PC-3 (cell line): ENCODE measurements at regions of chr12 and their contacts with region 1.

Region 1: GRCh38 chr12:111942557-111942956 is 70.4 kb downstream of the TMEM116 start:
- DNase-seq: peak; percentile 94
- ATAC-seq: peak; percentile 88
- H3K4me3 ChIP-seq: no peak overlapping the region
- H3K27ac ChIP-seq: no peak overlapping the region
- H3K4me1 ChIP-seq: peaks cover 9% of the 10 kb centered on the region; the same call in 1 of the 2 replicates
- H3K27me3 ChIP-seq: no peaks in the 10 kb centered on the region
- CTCF ChIP-seq: no peak

Region 2: GRCh38 chr12:111823891-111824290 is 118.7 kb before region 1 on chr12:
- CTCF ChIA-PET with region 1: interaction called, 8 read pairs
- POLR2A ChIA-PET with region 1: no interaction called
- intact Hi-C with region 1: loop called (anchors 2 kb)
- DNase-seq: no peak
- ATAC-seq: no peak
- H3K4me3 ChIP-seq: no peak overlapping the region
- H3K27ac ChIP-seq: no peak overlapping the region
- H3K4me1 ChIP-seq: peaks cover 13% of the 10 kb centered on the region
- H3K27me3 ChIP-seq: 0 out of 2 replicates have a peak, but pooled peaks cover 9% of the 10 kb centered on the region
- CTCF ChIP-seq: no peak

Region 3: GRCh38 chr12:111927346-111927745 is 15.2 kb before region 1 on chr12:
- CTCF ChIA-PET with region 1: interaction called, 10 read pairs
- POLR2A ChIA-PET with region 1: no interaction called
- intact Hi-C with region 1: no loop called
- DNase-seq: no peak
- ATAC-seq: no peak
- H3K4me3 ChIP-seq: no peak overlapping the region
- H3K27ac ChIP-seq: no peak overlapping the region
- H3K4me1 ChIP-seq: no peaks in the 10 kb centered on the region
- H3K27me3 ChIP-seq: no peaks in the 10 kb centered on the region
- CTCF ChIP-seq: no peak

Region 4: DNA sequence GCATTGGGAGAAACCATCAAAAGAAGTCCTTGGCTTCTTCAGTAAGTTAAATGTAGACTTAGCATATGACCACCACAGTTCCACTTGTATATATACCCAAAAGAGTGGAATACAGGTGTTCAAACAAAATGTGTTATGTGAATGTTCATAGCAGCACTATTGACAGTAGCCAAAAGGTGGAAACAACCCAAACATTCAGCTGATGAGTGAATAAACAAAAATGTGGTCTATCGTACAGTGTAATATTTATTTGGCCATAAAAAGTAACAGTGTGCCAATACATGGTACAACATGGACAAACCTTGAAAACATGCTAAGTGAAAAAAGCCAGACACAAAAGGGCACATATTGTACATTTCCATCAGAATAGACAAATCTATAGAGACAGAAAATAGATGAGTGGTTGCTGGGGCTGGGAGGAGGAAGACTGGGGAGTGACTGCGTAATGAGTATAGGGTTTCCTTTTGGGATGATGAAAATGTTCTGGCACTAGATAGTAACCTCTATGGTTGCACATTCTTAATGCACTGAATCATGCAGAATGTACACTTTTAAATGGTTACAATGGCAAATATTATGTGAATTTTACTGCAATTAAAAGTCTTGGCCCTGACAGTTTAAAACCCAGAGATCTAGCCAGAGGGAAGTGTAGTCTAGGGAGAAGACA is 76.1 kb after region 1 on chr12:
- CTCF ChIA-PET with region 1: interaction called, 17 read pairs
- POLR2A ChIA-PET with region 1: interaction called, 11 read pairs
- intact Hi-C with region 1: loop called (anchors 1 kb)
- DNase-seq: peak; percentile 95
- ATAC-seq: peak; percentile 88
- H3K4me3 ChIP-seq: peak overlapping the region; percentile 14; the same call in 1 of the 2 replicates
- H3K27ac ChIP-seq: peak overlapping the region; percentile 38
- H3K4me1 ChIP-seq: peaks cover 41% of the 10 kb centered on the region
- H3K27me3 ChIP-seq: no peaks in the 10 kb centered on the region
- CTCF ChIP-seq: no peak

Region 5: GRCh38 chr12:112190648-112191047 is 248.1 kb after region 1 on chr12:
- CTCF ChIA-PET with region 1: interaction called, 11 read pairs
- POLR2A ChIA-PET with region 1: no interaction called
- intact Hi-C with region 1: no loop called
- DNase-seq: peak; percentile 34
- ATAC-seq: peak; percentile 22
- H3K4me3 ChIP-seq: no peak overlapping the region
- H3K27ac ChIP-seq: no peak overlapping the region
- H3K4me1 ChIP-seq: no peaks in the 10 kb centered on the region
- H3K27me3 ChIP-seq: no peaks in the 10 kb centered on the region
- CTCF ChIP-seq: peak; percentile 34; the same call in 1 of the 2 replicates